CD8-positive, alpha-beta memory T cell (primary cell): ENCODE measurements at regions of chr3 and their contacts with region 1.

Region 1: DNA sequence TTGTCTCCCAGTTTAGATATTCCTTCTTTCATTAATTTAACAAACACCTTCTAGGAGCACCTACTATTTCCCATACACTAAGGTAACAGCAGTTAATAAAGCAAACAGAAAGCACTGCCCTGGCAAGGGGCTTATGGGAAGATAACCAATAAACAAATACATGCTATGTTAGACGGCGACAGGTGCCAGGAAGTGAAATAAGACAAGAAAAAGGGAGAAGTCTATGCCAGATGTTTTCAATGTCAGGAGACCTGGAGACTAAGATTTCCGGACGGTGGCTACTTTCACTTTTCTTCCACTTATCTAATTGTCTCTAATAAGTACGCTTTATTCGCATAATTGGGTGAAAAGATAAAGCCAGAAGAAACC is 32.5 kb upstream of the ZNF445 start:
- DNase-seq: no peak
- H3K4me3 ChIP-seq: peak overlapping the region; percentile 70
- H3K4me3 Mint-ChIP-seq: peak overlapping the region; percentile 88 to 99 (median 97)
- H3K27ac ChIP-seq: peak overlapping the region; percentile 75
- H3K27ac Mint-ChIP-seq: peak overlapping the region; percentile 51 to 98 (median 94)
- H3K4me1 ChIP-seq: peaks cover 27% of the 10 kb centered on the region
- H3K4me1 Mint-ChIP-seq: peaks cover 40 to 59% (median 59%) of the 10 kb centered on the region in 3 donors
- H3K27me3 ChIP-seq: no peaks in the 10 kb centered on the region
- H3K27me3 Mint-ChIP-seq: peaks cover 0 to 2% of the 10 kb centered on the region in 2 donors

Region 2: GRCh38 chr3:44338010-44338827 is 171.8 kb before region 1 on chr3 and contains the start of gene TCAIM:
- CTCF ChIA-PET with region 1: no interaction called
- POLR2A ChIA-PET with region 1: interaction called, 27 read pairs
- DNase-seq: peak; percentile 98 to 100 (median 99)
- H3K4me3 ChIP-seq: peak within 1 kb of the TSS; percentile 94
- H3K4me3 Mint-ChIP-seq: peak within 1 kb of the TSS; percentile 92 to 98 (median 97)
- H3K27ac ChIP-seq: peak within 1 kb of the TSS; percentile 90
- H3K27ac Mint-ChIP-seq: peak within 1 kb of the TSS; percentile 93 to 99 (median 98)
- H3K4me1 ChIP-seq: peaks cover 19% of the 10 kb centered on the region
- H3K4me1 Mint-ChIP-seq: peaks cover 23 to 44% (median 33%) of the 10 kb centered on the region in 3 donors
- H3K27me3 ChIP-seq: no peaks in the 10 kb centered on the region
- H3K27me3 Mint-ChIP-seq: peaks cover 2 to 13% of the 10 kb centered on the region in 2 donors
- total RNA-seq, gene TCAIM: 12.8 to 13.6 TPM

Region 3: GRCh38 chr3:44477312-44478030 is 32.5 kb before region 1 on chr3 and contains the start of gene ZNF445:
- CTCF ChIA-PET with region 1: no interaction called
- POLR2A ChIA-PET with region 1: interaction called, 15 read pairs
- DNase-seq: peak; percentile 61 to 83 (median 78)
- H3K4me3 ChIP-seq: peak within 1 kb of the TSS; percentile 78
- H3K4me3 Mint-ChIP-seq: peak within 1 kb of the TSS; percentile 91 to 96 (median 94)
- H3K27ac ChIP-seq: peak within 1 kb of the TSS; percentile 64
- H3K27ac Mint-ChIP-seq: peak within 1 kb of the TSS; percentile 68 to 99 (median 92)
- H3K4me1 ChIP-seq: peaks cover 24% of the 10 kb centered on the region
- H3K4me1 Mint-ChIP-seq: peaks cover 34 to 53% (median 52%) of the 10 kb centered on the region in 3 donors
- H3K27me3 ChIP-seq: no peaks in the 10 kb centered on the region
- H3K27me3 Mint-ChIP-seq: no peaks in the 10 kb centered on the region
- total RNA-seq, gene ZNF445: 15.8 to 16.2 TPM